Activated CD4-positive, alpha-beta T cell treated with anti-CD3 and anti-CD28 coated beads for 36 hours (primary cell): ENCODE measurements at regions of chr21 and their contacts with region 1.

Region 1: DNA sequence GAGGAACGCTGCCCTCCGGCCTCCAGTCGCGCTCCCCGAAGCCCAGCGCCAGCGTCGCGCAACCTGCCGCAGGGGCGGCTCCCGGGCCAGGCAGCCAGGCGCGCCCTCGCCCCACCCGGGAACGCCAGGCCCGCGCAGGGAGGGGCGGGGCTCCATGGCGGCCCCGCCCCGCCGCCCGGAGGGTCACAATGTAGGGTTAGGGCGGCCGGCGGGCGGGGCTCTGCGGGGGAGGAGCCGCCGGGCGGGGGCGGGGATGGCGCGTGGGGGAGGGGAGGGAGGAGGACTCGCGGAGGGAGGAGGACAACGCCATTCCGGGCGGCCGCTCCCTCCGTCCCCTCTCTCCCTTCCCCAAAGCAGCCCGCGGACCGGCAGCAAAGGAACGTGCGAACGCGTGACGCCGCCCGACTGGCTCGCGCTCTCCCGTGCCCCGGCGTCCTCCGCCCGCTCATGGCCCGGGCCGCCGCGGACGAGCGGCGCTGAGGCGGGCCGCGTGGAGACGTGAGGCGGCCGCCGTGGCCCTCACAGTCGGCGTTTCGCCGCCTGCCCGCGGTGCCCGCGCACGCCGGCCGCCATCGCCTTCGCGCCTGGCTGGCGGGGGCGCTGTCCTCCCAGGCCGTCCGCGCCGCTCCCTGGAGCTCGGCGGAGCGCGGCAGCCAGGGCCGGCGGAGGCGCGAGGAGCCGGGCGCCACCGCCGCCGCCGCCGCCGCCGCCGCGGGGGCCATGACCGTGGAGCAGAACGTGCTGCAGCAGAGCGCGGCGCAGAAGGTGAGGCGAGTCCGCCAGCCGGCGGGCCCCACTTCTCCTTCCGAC is at the start of gene USP25:
- DNase-seq: peak; percentile 90
- ATAC-seq: peak; percentile 82
- H3K4me3 Mint-ChIP-seq: peak within 1 kb of the TSS; percentile 90
- H3K27ac Mint-ChIP-seq: peak within 1 kb of the TSS; percentile 90
- H3K4me1 Mint-ChIP-seq: peaks cover 25% of the 10 kb centered on the region
- H3K27me3 Mint-ChIP-seq: peaks cover 4% of the 10 kb centered on the region
- total RNA-seq, gene USP25: 31.8 to 35.8 TPM

Region 2: DNA sequence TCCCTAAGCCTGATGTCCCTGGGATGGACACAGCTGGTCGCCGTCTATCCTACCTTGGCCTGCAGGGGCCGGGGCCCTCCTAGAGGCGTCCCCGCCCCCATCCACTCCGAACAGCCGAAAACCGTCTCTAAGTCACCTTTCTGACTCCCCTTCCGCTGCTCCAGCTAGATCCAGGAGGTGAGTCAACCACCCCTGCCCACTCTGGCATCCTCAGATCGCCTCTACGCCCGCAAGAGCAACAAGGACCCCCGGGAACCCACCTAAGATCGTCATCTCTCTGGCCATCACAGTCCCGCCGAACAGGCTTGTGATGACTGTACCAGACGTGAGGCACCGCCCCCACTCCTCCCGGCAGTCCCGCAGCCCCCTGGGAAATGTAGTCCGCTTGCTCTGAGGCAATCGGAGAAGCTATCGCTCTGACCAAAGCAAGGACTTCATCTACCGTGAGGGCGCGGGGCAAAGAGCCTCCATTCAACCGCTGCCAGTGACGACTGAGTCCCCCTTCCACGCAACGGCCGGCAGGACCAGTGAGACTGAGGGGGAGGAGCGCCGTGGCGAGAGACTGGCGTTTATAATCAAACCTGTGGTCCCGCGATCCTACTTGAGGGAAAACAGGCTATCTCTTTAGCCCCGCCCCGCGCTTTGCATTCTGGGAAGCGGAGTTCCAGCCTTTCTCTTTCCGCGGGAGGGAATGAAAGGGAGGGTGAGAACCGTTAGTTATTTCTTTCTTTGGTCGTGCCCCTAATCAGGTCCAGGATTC is 1346.9 kb before region 1 on chr21 and contains the start of gene HSPA13:
- CTCF ChIA-PET with region 1: no interaction called
- POLR2A ChIA-PET with region 1: no interaction called
- intact Hi-C with region 1: loop called (anchors 1 to 2 kb)
- DNase-seq: peak; percentile 99
- ATAC-seq: peak; percentile 97
- H3K4me3 Mint-ChIP-seq: peak within 1 kb of the TSS; percentile 90
- H3K27ac Mint-ChIP-seq: peak within 1 kb of the TSS; percentile 98
- H3K4me1 Mint-ChIP-seq: peaks cover 29% of the 10 kb centered on the region
- H3K27me3 Mint-ChIP-seq: no peaks in the 10 kb centered on the region
- total RNA-seq, gene HSPA13: 29.5 to 50.2 TPM

Region 3: DNA sequence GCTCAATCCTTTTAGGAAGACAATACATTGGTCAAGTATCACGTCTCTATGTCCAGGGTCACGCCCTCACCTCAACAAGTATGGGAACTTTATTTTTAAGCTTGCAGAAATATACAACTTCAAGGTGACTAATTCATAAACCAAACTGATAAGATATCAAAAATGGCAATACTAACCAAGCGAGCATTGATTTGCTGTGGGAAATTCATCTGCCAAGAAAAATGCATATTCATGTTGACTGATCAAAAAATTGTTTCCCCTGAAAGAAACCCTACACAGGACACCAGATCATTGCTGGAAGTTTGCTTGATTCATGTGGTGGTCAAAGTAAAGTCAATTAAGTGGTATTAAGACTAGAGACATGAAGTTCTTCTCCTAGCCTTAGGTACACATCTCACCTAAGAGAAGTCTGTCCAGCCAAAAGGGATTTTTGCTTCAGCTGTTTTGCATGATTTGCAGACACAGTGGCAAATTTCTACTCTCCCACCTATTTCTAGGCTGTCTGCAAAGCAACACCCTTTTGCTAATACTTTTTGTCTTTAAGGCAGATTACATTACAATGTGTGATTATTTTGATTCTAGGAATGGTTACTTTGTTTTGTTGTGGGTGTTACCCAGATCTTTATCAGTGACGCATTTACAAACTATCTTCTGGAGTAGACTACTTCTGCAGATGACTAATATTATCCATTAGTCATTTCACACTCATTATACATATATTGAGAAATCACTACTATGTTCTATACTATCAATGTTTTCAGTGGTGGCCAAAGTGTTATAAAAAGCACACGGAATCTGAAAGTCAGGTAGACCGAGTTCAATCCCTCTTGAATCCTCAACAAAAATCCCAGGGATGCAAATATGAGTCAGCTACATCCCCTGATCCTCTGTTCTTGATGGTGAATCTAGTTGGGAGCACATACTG is 1196.1 kb before region 1 on chr21:
- CTCF ChIA-PET with region 1: no interaction called
- POLR2A ChIA-PET with region 1: no interaction called
- intact Hi-C with region 1: loop called (anchors 5 to 10 kb)
- DNase-seq: peak; percentile 21
- ATAC-seq: peak; percentile 78
- H3K4me3 Mint-ChIP-seq: peak overlapping the region; percentile 83
- H3K27ac Mint-ChIP-seq: peak overlapping the region; percentile 100
- H3K4me1 Mint-ChIP-seq: peaks cover 80% of the 10 kb centered on the region
- H3K27me3 Mint-ChIP-seq: no peaks in the 10 kb centered on the region

Region 4: GRCh38 chr21:15815285-15815684 is 85.4 kb after region 1 on chr21:
- CTCF ChIA-PET with region 1: interaction called, 3 read pairs
- POLR2A ChIA-PET with region 1: no interaction called
- intact Hi-C with region 1: loop called in 1 of 2 experiments (anchors 5 kb)
- DNase-seq: no peak
- ATAC-seq: no peak
- H3K4me3 Mint-ChIP-seq: no peak overlapping the region
- H3K27ac Mint-ChIP-seq: no peak overlapping the region
- H3K4me1 Mint-ChIP-seq: peaks cover 9% of the 10 kb centered on the region
- H3K27me3 Mint-ChIP-seq: no peaks in the 10 kb centered on the region

Region 5: GRCh38 chr21:17611414-17612022 is 1881.6 kb after region 1 on chr21:
- CTCF ChIA-PET with region 1: no interaction called
- POLR2A ChIA-PET with region 1: no interaction called
- intact Hi-C with region 1: loop called in 1 of 2 experiments (anchors 5 kb)
- DNase-seq: peak; percentile 91
- ATAC-seq: peak; percentile 64
- H3K4me3 Mint-ChIP-seq: peak overlapping the region; percentile 75
- H3K27ac Mint-ChIP-seq: peak overlapping the region; percentile 94
- H3K4me1 Mint-ChIP-seq: peaks cover 35% of the 10 kb centered on the region
- H3K27me3 Mint-ChIP-seq: no peaks in the 10 kb centered on the region